Caco-2 (cell line): ENCODE measurements at regions of chr2 and their contacts with region 1.

Region 1: GRCh38 chr2:151409601-151410484 is at the start of gene RIF1:
- DNase-seq: peak; percentile 93 to 95
- H3K4me3 ChIP-seq: peak within 1 kb of the TSS; percentile 69
- H3K4me3 Mint-ChIP-seq: peak within 1 kb of the TSS; percentile 97
- H3K27ac Mint-ChIP-seq: peak within 1 kb of the TSS; percentile 100
- H3K4me1 ChIP-seq: no peaks in the 10 kb centered on the region
- H3K4me1 Mint-ChIP-seq: peaks cover 6% of the 10 kb centered on the region
- H3K27me3 ChIP-seq: no peaks in the 10 kb centered on the region
- H3K27me3 Mint-ChIP-seq: peaks cover 3% of the 10 kb centered on the region
- CTCF ChIP-seq: peak; percentile 52 to 77
- total RNA-seq, gene RIF1: 62.9 and 63.9 TPM in 2 replicates

Region 2: GRCh38 chr2:151261231-151261976 is 148.4 kb before region 1 on chr2 and contains the start of gene RBM43:
- CTCF ChIA-PET with region 1: no interaction called
- POLR2A ChIA-PET with region 1: interaction called, 16 read pairs
- intact Hi-C with region 1: loop called (anchors 10 kb)
- DNase-seq: peak; percentile 75 to 87
- H3K4me3 ChIP-seq: peak within 1 kb of the TSS; percentile 66
- H3K4me3 Mint-ChIP-seq: peak within 1 kb of the TSS; percentile 80
- H3K27ac Mint-ChIP-seq: peak within 1 kb of the TSS; percentile 63
- H3K4me1 ChIP-seq: 0 out of 2 replicates have a peak, but pooled peaks cover 5% of the 10 kb centered on the region
- H3K4me1 Mint-ChIP-seq: peaks cover 22% of the 10 kb centered on the region
- H3K27me3 ChIP-seq: no peaks in the 10 kb centered on the region
- H3K27me3 Mint-ChIP-seq: peaks cover 5% of the 10 kb centered on the region
- CTCF ChIP-seq: peak in 1 of 2 experiments; percentile 16
- total RNA-seq, gene RBM43: 1.4 and 1.6 TPM in 2 replicates

Region 3: GRCh38 chr2:151289369-151290088 is 120.3 kb before region 1 on chr2 and contains the start of gene NMI:
- CTCF ChIA-PET with region 1: interaction called, 4 read pairs
- POLR2A ChIA-PET with region 1: interaction called, 15 read pairs
- intact Hi-C with region 1: no loop called
- DNase-seq: peak; percentile 72 to 76
- H3K4me3 ChIP-seq: peak within 1 kb of the TSS; percentile 77
- H3K4me3 Mint-ChIP-seq: peak within 1 kb of the TSS; percentile 74
- H3K27ac Mint-ChIP-seq: peak within 1 kb of the TSS; percentile 63
- H3K4me1 ChIP-seq: no peaks in the 10 kb centered on the region
- H3K4me1 Mint-ChIP-seq: no peaks in the 10 kb centered on the region
- H3K27me3 ChIP-seq: no peaks in the 10 kb centered on the region
- H3K27me3 Mint-ChIP-seq: peaks cover 4% of the 10 kb centered on the region
- CTCF ChIP-seq: no peak
- total RNA-seq, gene NMI: 5.1 and 5.4 TPM in 2 replicates